MCF 10A (cell line): ENCODE measurements at regions of chr13 and their contacts with region 1.

Region 1: DNA sequence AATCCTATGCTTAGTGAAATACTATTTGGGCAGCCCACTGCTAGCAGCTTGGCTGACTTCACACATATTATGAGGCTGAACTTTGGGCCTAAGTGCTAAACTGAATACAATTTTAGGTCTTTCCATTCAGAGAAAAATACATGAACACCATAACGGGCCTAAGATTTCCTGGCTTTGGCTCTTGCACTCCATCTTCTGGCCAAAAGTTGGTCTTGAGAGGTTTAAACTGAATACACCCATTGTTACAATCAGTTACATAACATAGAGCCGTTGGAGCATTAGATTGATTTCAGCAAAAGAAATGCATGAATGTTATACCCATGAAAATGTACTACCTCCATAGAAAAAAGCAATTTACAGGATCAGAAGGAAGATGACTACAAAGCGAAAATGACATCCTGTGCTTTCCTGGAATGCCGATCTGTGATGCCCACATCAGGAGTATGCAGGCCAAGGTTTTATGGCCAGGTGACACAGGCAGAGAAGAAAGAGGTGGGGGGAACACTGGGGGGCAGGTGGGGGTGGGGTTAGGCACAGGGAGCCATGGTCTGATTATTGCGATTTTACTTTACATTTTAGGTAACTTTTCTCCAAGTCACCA is 11.1 kb upstream of the SHISA2 start:
- DNase-seq: peak; percentile 71
- H3K4me3 Mint-ChIP-seq: no peak overlapping the region
- H3K27ac Mint-ChIP-seq: no peak overlapping the region
- H3K4me1 Mint-ChIP-seq: peaks cover 13% of the 10 kb centered on the region
- H3K27me3 Mint-ChIP-seq: no peaks in the 10 kb centered on the region
- CTCF ChIP-seq: peak; percentile 68

Region 2: GRCh38 chr13:25507841-25508240 is 555.1 kb before region 1 on chr13:
- CTCF ChIA-PET with region 1: interaction called, 3 read pairs
- POLR2A ChIA-PET with region 1: no interaction called
- intact Hi-C with region 1: loop called (anchors 2 kb)
- DNase-seq: no peak
- H3K4me3 Mint-ChIP-seq: no peak overlapping the region
- H3K27ac Mint-ChIP-seq: no peak overlapping the region
- H3K4me1 Mint-ChIP-seq: no peaks in the 10 kb centered on the region
- H3K27me3 Mint-ChIP-seq: peaks cover 17% of the 10 kb centered on the region
- CTCF ChIP-seq: no peak

Region 3: GRCh38 chr13:25827831-25828465 is 235.0 kb before region 1 on chr13:
- CTCF ChIA-PET with region 1: interaction called, 12 read pairs
- POLR2A ChIA-PET with region 1: no interaction called
- intact Hi-C with region 1: loop called (anchors 1 kb)
- DNase-seq: no peak
- H3K4me3 Mint-ChIP-seq: no peak overlapping the region
- H3K27ac Mint-ChIP-seq: no peak overlapping the region
- H3K4me1 Mint-ChIP-seq: no peaks in the 10 kb centered on the region
- H3K27me3 Mint-ChIP-seq: no peaks in the 10 kb centered on the region
- CTCF ChIP-seq: no peak

Region 4: GRCh38 chr13:25901460-25902376 is 161.2 kb before region 1 on chr13:
- CTCF ChIA-PET with region 1: no interaction called
- POLR2A ChIA-PET with region 1: no interaction called
- intact Hi-C with region 1: loop called (anchors 10 kb)
- DNase-seq: peak; percentile 91
- H3K4me3 Mint-ChIP-seq: no peak overlapping the region
- H3K27ac Mint-ChIP-seq: peak overlapping the region; percentile 80
- H3K4me1 Mint-ChIP-seq: peaks cover 19% of the 10 kb centered on the region
- H3K27me3 Mint-ChIP-seq: no peaks in the 10 kb centered on the region
- CTCF ChIP-seq: no peak